Left lung (tissue), 14 donors: ENCODE measurements at regions of chr2 and their contacts with region 1.

Region 1: DNA sequence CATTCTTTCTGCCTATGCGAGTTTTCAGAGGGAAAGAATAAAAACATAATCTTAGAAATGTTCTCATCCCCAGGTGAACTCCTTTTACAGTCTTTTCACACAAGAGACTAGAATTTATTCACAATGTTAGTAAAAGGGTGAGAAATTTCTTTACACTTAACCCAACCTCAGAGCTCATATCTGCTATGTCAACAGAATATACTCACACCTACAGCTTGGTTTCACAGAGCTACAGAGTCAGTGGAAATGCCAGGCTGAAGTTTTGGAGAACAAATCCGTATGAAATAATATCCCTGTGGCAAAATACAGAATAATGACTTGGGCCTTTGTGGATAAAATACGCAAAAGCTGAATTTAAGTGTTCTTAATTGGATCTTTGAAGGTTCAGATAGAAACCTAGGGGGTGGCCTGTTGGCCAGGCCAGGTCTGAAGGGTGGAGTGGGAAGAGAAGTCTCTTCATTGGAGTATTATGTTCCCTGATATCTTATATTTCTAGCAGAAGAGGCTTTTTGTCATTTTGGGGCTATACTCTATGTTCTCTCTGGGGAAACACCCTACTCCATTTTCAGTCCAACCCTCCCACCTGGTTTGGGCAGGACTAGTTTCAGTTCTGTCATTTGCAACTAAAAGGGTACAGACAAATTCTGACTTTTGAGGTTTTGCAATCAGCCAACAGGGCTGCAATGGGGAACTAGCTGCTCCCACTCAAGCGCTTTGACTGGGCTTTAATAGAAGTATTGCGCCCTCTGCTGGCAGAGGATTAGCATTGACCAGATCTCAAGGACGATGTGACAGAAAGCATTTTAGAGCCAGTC is 25.7 kb downstream of the FBXO48 start:
- DNase-seq: peak in 3 of 4 donors; percentile 84 to 92 (median 86)
- ATAC-seq: peak; percentile 97
- H3K4me3 ChIP-seq: no peak overlapping the region
- H3K27ac ChIP-seq: peak overlapping the region in 1 of 2 donors; percentile 24
- H3K4me1 ChIP-seq: peaks cover 14 to 20% of the 10 kb centered on the region in 2 donors
- H3K27me3 ChIP-seq: no peaks in the 10 kb centered on the region
- CTCF ChIP-seq: peak; percentile 86 to 93

Region 2: DNA sequence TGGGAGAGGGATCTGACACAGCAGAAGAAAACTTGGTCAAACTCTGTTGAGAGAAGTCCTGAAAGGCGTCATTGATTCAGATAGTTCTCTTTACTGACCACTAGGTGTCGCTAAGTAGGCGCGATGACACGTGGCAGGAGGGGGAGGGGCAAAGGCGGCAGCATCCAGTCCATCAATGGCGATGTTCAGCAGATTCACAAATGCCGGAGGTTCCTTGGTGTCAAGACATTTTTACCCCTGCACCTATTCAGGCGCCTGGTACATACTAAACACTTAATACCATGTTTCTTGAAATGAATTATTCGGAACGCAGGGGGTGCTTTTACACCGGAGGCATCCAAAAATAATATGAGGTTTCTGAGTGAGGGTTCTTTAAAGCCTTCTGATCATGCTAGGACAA is 79.3 kb before region 1 on chr2:
- intact Hi-C with region 1: loop called in 1 of 2 experiments (anchors 5 kb)
- DNase-seq: peak in 3 of 4 donors; percentile 57 to 90 (median 75)
- ATAC-seq: peak; percentile 84
- H3K4me3 ChIP-seq: no peak overlapping the region
- H3K27ac ChIP-seq: peak overlapping the region in 1 of 2 donors; percentile 68
- H3K4me1 ChIP-seq: peaks cover 0 to 28% of the 10 kb centered on the region in 2 donors
- H3K27me3 ChIP-seq: no peaks in the 10 kb centered on the region
- CTCF ChIP-seq: peak; percentile 67 to 83

Region 3: DNA sequence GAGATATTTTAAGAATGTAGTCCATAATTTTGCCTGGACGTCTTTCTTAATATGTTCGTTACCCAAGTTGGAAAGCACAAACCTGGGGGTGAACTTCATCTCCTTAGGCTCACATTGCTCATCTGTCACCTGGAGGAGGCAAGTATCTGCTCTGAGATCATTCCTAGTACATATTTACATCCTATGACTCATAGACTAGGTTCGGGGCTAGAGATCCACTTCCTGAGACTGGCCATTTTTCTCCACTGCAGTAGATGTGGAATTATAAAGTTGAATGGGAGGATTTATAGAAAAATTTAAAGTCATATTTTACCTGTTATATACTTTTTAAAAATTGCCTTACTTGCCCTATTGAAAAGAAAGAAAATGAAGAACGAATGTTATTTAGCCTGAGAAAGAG is 124.5 kb after region 1 on chr2:
- intact Hi-C with region 1: no loop called
- DNase-seq: no peak
- ATAC-seq: no peak
- H3K4me3 ChIP-seq: no peak overlapping the region
- H3K27ac ChIP-seq: no peak overlapping the region
- H3K4me1 ChIP-seq: no peaks in the 10 kb centered on the region
- H3K27me3 ChIP-seq: no peaks in the 10 kb centered on the region
- CTCF ChIP-seq: no peak